Activated CD4-positive, alpha-beta memory T cell treated with anti-CD3 and anti-CD28 coated beads for 36 hours (primary cell): ENCODE measurements at regions of chr6 and their contacts with region 1.

Region 1: GRCh38 chr6:132962936-132963868 is 148.8 kb downstream of the RPS12 start:
- DNase-seq: peak; percentile 70
- H3K4me3 Mint-ChIP-seq: no peak overlapping the region
- H3K27ac Mint-ChIP-seq: no peak overlapping the region
- H3K4me1 Mint-ChIP-seq: peaks cover 3% of the 10 kb centered on the region
- H3K27me3 Mint-ChIP-seq: peaks cover 25% of the 10 kb centered on the region

Region 2: GRCh38 chr6:132530293-132530974 is 432.8 kb before region 1 on chr6:
- CTCF ChIA-PET with region 1: interaction called, 4 read pairs
- POLR2A ChIA-PET with region 1: no interaction called
- intact Hi-C with region 1: loop called (anchors 1 kb)
- DNase-seq: peak; percentile 69
- H3K4me3 Mint-ChIP-seq: no peak overlapping the region
- H3K27ac Mint-ChIP-seq: no peak overlapping the region
- H3K4me1 Mint-ChIP-seq: no peaks in the 10 kb centered on the region
- H3K27me3 Mint-ChIP-seq: peaks cover 7% of the 10 kb centered on the region

Region 3: GRCh38 chr6:132643547-132643946 is 319.7 kb before region 1 on chr6:
- CTCF ChIA-PET with region 1: no interaction called
- POLR2A ChIA-PET with region 1: no interaction called
- intact Hi-C with region 1: no loop called
- DNase-seq: no peak
- H3K4me3 Mint-ChIP-seq: no peak overlapping the region
- H3K27ac Mint-ChIP-seq: no peak overlapping the region
- H3K4me1 Mint-ChIP-seq: peaks cover 2% of the 10 kb centered on the region
- H3K27me3 Mint-ChIP-seq: peaks cover 1% of the 10 kb centered on the region

Region 4: GRCh38 chr6:132669690-132670291 is 293.4 kb before region 1 on chr6:
- CTCF ChIA-PET with region 1: interaction called, 5 read pairs
- POLR2A ChIA-PET with region 1: no interaction called
- intact Hi-C with region 1: loop called (anchors 10 kb)
- DNase-seq: no peak
- H3K4me3 Mint-ChIP-seq: no peak overlapping the region
- H3K27ac Mint-ChIP-seq: no peak overlapping the region
- H3K4me1 Mint-ChIP-seq: peaks cover 4% of the 10 kb centered on the region
- H3K27me3 Mint-ChIP-seq: peaks cover 5% of the 10 kb centered on the region

Region 5: DNA sequence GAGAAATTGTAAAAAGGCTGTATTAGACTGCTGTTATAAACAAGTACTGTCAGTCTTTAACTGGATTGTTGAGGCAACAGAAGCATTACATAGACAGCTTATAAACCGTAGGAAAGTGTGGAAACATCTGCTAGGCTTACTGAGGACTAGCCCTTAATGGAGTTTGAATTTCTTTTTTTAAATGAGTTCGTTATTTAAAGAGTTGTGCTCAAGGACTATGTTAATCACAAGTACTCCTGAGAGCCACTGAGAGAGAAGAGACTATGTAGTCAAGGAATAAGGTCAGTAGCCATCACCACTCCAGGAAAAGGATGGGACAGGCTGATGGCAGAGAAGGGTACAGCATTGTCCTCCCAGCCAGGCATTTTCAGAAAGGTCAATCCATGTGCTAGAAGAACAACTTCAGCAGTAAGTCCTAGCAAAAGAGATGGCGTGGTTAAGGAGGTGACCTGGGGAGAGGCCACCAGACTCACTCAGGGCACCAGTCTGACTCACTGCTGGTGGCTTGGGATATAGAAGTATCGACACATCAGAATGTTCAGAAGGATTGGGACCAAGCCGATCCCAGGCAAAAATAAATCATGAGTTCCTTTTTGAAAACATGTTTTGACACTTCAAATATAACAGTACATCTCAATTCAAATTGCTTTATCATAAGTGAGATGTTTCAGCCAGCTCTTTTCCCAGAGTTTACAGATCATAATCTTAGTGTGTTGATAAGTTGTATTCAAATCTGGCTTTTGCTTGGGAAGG is 142.4 kb before region 1 on chr6:
- CTCF ChIA-PET with region 1: interaction called, 8 read pairs
- POLR2A ChIA-PET with region 1: no interaction called
- intact Hi-C with region 1: loop called (anchors 2 kb)
- DNase-seq: no peak
- H3K4me3 Mint-ChIP-seq: no peak overlapping the region
- H3K27ac Mint-ChIP-seq: peak overlapping the region; percentile 64
- H3K4me1 Mint-ChIP-seq: peaks cover 50% of the 10 kb centered on the region
- H3K27me3 Mint-ChIP-seq: no peaks in the 10 kb centered on the region

Region 6: DNA sequence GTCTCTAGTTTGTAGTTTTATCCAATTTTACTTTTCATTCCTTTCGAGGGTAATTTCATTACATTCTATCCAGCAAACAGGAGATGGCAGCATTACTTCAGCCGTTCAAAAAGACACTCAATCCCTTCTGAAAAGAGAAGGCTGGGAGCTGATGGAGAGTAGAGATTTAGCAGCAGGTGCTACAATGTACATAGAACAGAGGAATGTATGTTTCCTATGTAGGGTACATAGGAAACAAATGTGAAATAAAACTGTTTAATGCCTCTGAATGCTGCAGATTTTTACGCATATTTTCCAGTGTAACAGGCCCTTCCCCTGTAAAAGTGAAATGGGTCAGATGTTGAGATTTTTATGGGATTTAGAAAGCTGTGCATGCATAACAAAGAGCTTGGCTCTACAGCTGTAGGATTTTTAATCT is 132.9 kb before region 1 on chr6:
- CTCF ChIA-PET with region 1: interaction called, 24 read pairs
- POLR2A ChIA-PET with region 1: no interaction called
- intact Hi-C with region 1: no loop called
- DNase-seq: no peak
- H3K4me3 Mint-ChIP-seq: no peak overlapping the region
- H3K27ac Mint-ChIP-seq: no peak overlapping the region
- H3K4me1 Mint-ChIP-seq: no peaks in the 10 kb centered on the region
- H3K27me3 Mint-ChIP-seq: no peaks in the 10 kb centered on the region

Region 7: DNA sequence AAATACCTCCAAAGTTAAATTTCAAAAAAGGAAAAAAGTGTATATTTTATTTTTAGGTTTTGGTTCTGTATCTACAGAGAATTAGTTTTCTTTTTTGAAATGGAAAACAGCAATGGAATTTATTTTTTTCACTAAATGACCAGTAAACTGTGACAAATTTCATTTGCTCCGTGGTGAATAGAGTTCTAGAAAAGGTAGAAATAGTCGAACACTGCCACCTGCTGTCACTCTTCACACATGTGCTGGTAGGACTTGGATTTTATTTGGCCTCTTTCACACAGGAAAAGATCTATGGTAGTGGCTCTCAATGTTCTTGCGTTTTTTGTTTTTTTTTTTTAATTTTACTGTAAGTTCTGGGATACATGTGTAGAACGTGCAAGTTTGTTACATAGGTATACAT is 590.5 kb after region 1 on chr6:
- CTCF ChIA-PET with region 1: interaction called, 6 read pairs
- POLR2A ChIA-PET with region 1: no interaction called
- intact Hi-C with region 1: loop called (anchors 5 kb)
- DNase-seq: peak; percentile 22
- H3K4me3 Mint-ChIP-seq: no peak overlapping the region
- H3K27ac Mint-ChIP-seq: no peak overlapping the region
- H3K4me1 Mint-ChIP-seq: no peaks in the 10 kb centered on the region
- H3K27me3 Mint-ChIP-seq: no peaks in the 10 kb centered on the region

Region 8: DNA sequence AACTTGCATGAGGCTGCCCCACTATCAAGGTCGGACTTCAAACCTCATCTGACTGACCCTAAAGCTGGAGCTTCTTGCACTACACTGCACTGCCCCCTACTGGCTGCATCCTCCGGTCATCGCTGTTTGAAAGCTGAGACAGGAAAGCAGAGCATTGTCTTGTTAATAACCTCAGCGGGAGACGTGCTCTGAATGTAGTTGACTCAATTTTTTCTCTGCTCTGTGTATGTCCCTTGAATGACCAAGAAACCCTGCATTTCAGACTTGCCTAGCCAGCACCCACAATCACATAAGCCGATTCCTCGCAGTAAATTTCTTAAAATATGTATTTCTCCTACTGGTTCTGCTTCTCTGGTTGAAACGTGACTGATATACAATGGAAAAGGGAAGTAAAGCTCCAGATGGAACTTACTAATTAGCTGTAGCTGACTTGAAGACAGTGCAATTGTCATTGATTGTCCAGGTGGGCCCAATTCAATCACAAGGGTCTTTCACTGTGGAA is 953.5 kb after region 1 on chr6:
- CTCF ChIA-PET with region 1: interaction called, 5 read pairs
- POLR2A ChIA-PET with region 1: no interaction called
- intact Hi-C with region 1: loop called (anchors 2 kb)
- DNase-seq: peak; percentile 84
- H3K4me3 Mint-ChIP-seq: no peak overlapping the region
- H3K27ac Mint-ChIP-seq: no peak overlapping the region
- H3K4me1 Mint-ChIP-seq: peaks cover 4% of the 10 kb centered on the region
- H3K27me3 Mint-ChIP-seq: peaks cover 7% of the 10 kb centered on the region